HCT116 (cell line): ENCODE measurements at regions of chr9 and their contacts with region 1.

Region 1: GRCh38 chr9:32526041-32526706 is at the start of gene RIGI:
- DNase-seq: peak; percentile 85
- ATAC-seq: peak; percentile 86
- H3K4me3 ChIP-seq: peak within 1 kb of the TSS; percentile 76 to 81
- H3K27ac ChIP-seq: peak within 1 kb of the TSS; percentile 76
- H3K4me1 ChIP-seq: peaks cover 11 to 22% of the 10 kb centered on the region in 2 experiments; a peak in 3 of 4 replicates
- H3K27me3 ChIP-seq: no peaks in the 10 kb centered on the region
- CTCF ChIP-seq: peak; percentile 49 to 59 (median 50); a peak in 5 of 6 replicates
- POLR2A ChIP-seq: no peak
- RAD21 ChIP-seq: peak; percentile 73
- total RNA-seq, gene RIGI: 5.5 TPM

Region 2: GRCh38 chr9:32571969-32572899 is 46.1 kb after region 1 on chr9:
- CTCF ChIA-PET with region 1: interaction called, 6 read pairs
- POLR2A ChIA-PET with region 1: no interaction called
- RAD21 ChIA-PET with region 1: interaction called in 1 of 2 experiments, 3 read pairs
- intact Hi-C with region 1: loop called (anchors 2 kb)
- DNase-seq: peak; percentile 67
- ATAC-seq: peak; percentile 85
- H3K4me3 ChIP-seq: peak overlapping the region; percentile 86 to 89
- H3K27ac ChIP-seq: peak overlapping the region; percentile 80
- H3K4me1 ChIP-seq: peaks cover 4 to 15% of the 10 kb centered on the region in 2 experiments; a peak in 3 of 4 replicates
- H3K27me3 ChIP-seq: no peaks in the 10 kb centered on the region
- CTCF ChIP-seq: peak; percentile 77 to 82 (median 82)
- POLR2A ChIP-seq: no peak
- RAD21 ChIP-seq: peak; percentile 73